PC-9 (cell line): ENCODE measurements at regions of chr7 and their contacts with region 1.

Region 1: GRCh38 chr7:138865843-138866242 is 67.8 kb upstream of the ATP6V0A4 start:
- DNase-seq: peak in 1 of 2 experiments; percentile 51
- H3K4me3 ChIP-seq: no peak overlapping the region
- H3K27ac ChIP-seq: no peak overlapping the region
- H3K4me1 ChIP-seq: peaks cover 28% of the 10 kb centered on the region
- H3K27me3 ChIP-seq: no peaks in the 10 kb centered on the region
- CTCF ChIP-seq: peak; percentile 80

Region 2: GRCh38 chr7:137898839-137899721 is 966.8 kb before region 1 on chr7:
- CTCF ChIA-PET with region 1: no interaction called
- POLR2A ChIA-PET with region 1: no interaction called
- intact Hi-C with region 1: loop called (anchors 1 kb)
- DNase-seq: peak; percentile 54 to 78
- H3K4me3 ChIP-seq: no peak overlapping the region
- H3K27ac ChIP-seq: no peak overlapping the region
- H3K4me1 ChIP-seq: no peaks in the 10 kb centered on the region
- H3K27me3 ChIP-seq: no peaks in the 10 kb centered on the region
- CTCF ChIP-seq: peak; percentile 95

Region 3: GRCh38 chr7:138459413-138460175 is 406.2 kb before region 1 on chr7:
- CTCF ChIA-PET with region 1: no interaction called
- POLR2A ChIA-PET with region 1: no interaction called
- intact Hi-C with region 1: loop called (anchors 2 kb)
- DNase-seq: peak; percentile 94 to 99
- H3K4me3 ChIP-seq: peak overlapping the region; percentile 53
- H3K27ac ChIP-seq: no peak overlapping the region
- H3K4me1 ChIP-seq: peaks cover 6% of the 10 kb centered on the region
- H3K27me3 ChIP-seq: no peaks in the 10 kb centered on the region
- CTCF ChIP-seq: peak; percentile 62

Region 4: GRCh38 chr7:138663725-138664710 is 201.8 kb before region 1 on chr7:
- CTCF ChIA-PET with region 1: no interaction called
- POLR2A ChIA-PET with region 1: no interaction called
- intact Hi-C with region 1: loop called (anchors 10 kb)
- DNase-seq: peak; percentile 69 to 90
- H3K4me3 ChIP-seq: peak overlapping the region; percentile 53
- H3K27ac ChIP-seq: peak overlapping the region; percentile 64
- H3K4me1 ChIP-seq: peaks cover 32% of the 10 kb centered on the region
- H3K27me3 ChIP-seq: no peaks in the 10 kb centered on the region
- CTCF ChIP-seq: no peak

Region 5: DNA sequence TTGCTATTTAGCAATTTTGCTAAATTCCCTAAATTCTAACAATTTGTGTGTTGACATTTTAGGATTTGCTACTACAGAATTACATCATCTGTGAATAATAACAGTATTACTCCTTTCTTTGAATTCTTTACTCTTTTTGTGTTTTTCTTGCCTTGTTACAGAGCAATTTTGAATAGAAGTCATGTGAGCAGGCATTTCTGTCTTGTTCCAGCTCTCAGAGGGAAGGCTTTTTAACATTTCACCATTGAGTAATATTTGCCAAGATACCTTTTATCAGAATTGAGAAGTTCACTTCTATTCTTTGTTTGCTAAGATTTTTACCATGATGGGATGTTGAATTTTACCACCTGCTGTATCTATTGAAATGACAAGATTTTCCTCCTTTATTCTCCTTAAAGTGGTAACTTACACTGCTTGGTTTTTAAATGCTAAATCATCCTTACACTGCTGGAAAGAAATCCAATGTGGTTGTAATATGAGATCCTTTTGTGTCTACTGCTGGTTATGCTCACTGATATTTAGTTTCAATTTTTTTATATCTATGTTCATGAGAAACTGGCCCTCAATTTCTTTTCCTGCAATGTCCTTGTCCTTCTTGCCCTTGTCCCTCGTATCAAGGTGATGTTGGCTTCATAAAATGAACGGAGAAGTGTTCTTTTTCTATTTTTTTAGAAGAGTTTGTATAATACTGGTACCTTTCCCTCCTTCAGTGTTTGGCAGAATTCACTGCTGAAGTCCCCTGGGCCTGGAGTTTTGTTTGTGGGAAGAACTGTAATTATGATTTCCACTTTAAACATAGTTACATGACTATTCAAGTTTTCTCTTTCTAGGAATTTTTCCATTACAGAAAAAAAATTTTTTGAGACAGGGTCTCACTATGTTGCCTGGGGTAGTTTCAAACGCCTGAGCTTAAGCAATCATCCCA is 17.5 kb before region 1 on chr7:
- CTCF ChIA-PET with region 1: no interaction called
- POLR2A ChIA-PET with region 1: no interaction called
- intact Hi-C with region 1: loop called (anchors 1 kb)
- DNase-seq: peak in 1 of 2 experiments; percentile 59
- H3K4me3 ChIP-seq: no peak overlapping the region
- H3K27ac ChIP-seq: peak overlapping the region; percentile 92
- H3K4me1 ChIP-seq: peaks cover 31% of the 10 kb centered on the region
- H3K27me3 ChIP-seq: no peaks in the 10 kb centered on the region
- CTCF ChIP-seq: no peak

Region 6: GRCh38 chr7:139328375-139328774 is 462.5 kb after region 1 on chr7:
- CTCF ChIA-PET with region 1: no interaction called
- POLR2A ChIA-PET with region 1: no interaction called
- intact Hi-C with region 1: no loop called
- DNase-seq: peak in 1 of 2 experiments; percentile 36
- H3K4me3 ChIP-seq: no peak overlapping the region
- H3K27ac ChIP-seq: no peak overlapping the region
- H3K4me1 ChIP-seq: no peaks in the 10 kb centered on the region
- H3K27me3 ChIP-seq: no peaks in the 10 kb centered on the region
- CTCF ChIP-seq: no peak